ENCODE measurements at regions of chr10 and their contacts with region 1.

Region 1: GRCh38 chr10:110600487-110601101 is 33.1 kb downstream of the SMC3 start:
- DNase-seq: peak in 6 of 9 donors; percentile 19 to 39 (median 29)
- ATAC-seq: peak; percentile 70
- H3K4me3 ChIP-seq: no peak overlapping the region
- H3K4me3 Mint-ChIP-seq: no peak overlapping the region
- H3K27ac ChIP-seq: no peak overlapping the region
- H3K27ac Mint-ChIP-seq: no peak overlapping the region
- H3K4me1 ChIP-seq: no peaks in the 10 kb centered on the region
- H3K4me1 Mint-ChIP-seq: peaks cover 0 to 6% (median 0%) of the 10 kb centered on the region in 7 donors
- H3K27me3 ChIP-seq: no peaks in the 10 kb centered on the region
- H3K27me3 Mint-ChIP-seq: no peaks in the 10 kb centered on the region

Region 2: GRCh38 chr10:110556969-110557601 is 43.5 kb before region 1 on chr10:
- CTCF ChIA-PET with region 1: interaction called, 3 read pairs
- POLR2A ChIA-PET with region 1: no interaction called
- intact Hi-C with region 1: loop called in 1 of 2 experiments (anchors 1 kb)
- DNase-seq: peak; percentile 27 to 68 (median 56)
- ATAC-seq: peak; percentile 99
- H3K4me3 ChIP-seq: no peak overlapping the region
- H3K4me3 Mint-ChIP-seq: peak overlapping the region in 1 of 10 donors; percentile 2
- H3K27ac ChIP-seq: no peak overlapping the region
- H3K27ac Mint-ChIP-seq: peak overlapping the region in 6 of 9 donors; percentile 1 to 67 (median 42)
- H3K4me1 ChIP-seq: no peaks in the 10 kb centered on the region
- H3K4me1 Mint-ChIP-seq: peaks cover 2 to 10% (median 5%) of the 10 kb centered on the region in 7 donors
- H3K27me3 ChIP-seq: no peaks in the 10 kb centered on the region
- H3K27me3 Mint-ChIP-seq: peaks cover 0 to 68% (median 0%) of the 10 kb centered on the region in 5 donors

Measured in naive thymus-derived CD4-positive, alpha-beta T cell (primary cell).